Activated T-helper 2 cell treated with anti-CD3 and anti-CD28 coated beads, Interferon-gamma antibody, Interleukin-2, Interleukin-4, amounts not matched to agents 10 μg/mL and 5 μg/mL and 100 μg/mL, durations not matched to agents 14 hours and 24 hours and 36 hours (primary cell): ENCODE measurements at regions of chr15 and their contacts with region 1.

Region 1: GRCh38 chr15:63891079-63891767 is 57.5 kb upstream of the HERC1 start:
- DNase-seq: peak; percentile 61
- H3K4me3 Mint-ChIP-seq: no peak overlapping the region
- H3K27ac Mint-ChIP-seq: no peak overlapping the region
- H3K4me1 Mint-ChIP-seq: peaks cover 43% of the 10 kb centered on the region
- H3K27me3 Mint-ChIP-seq: no peaks in the 10 kb centered on the region

Region 2: GRCh38 chr15:63504247-63504978 is 386.8 kb before region 1 on chr15 and contains the start of gene USP3:
- intact Hi-C with region 1: loop called (anchors 10 kb)
- DNase-seq: peak; percentile 92
- H3K4me3 Mint-ChIP-seq: peak within 1 kb of the TSS; percentile 89
- H3K27ac Mint-ChIP-seq: peak within 1 kb of the TSS; percentile 89
- H3K4me1 Mint-ChIP-seq: peaks cover 69% of the 10 kb centered on the region
- H3K27me3 Mint-ChIP-seq: no peaks in the 10 kb centered on the region
- total RNA-seq, gene USP3: 41.2 and 47.6 TPM in 2 replicates

Region 3: GRCh38 chr15:63752075-63752684 is 139.0 kb before region 1 on chr15:
- intact Hi-C with region 1: loop called (anchors 1 kb)
- DNase-seq: peak; percentile 32
- H3K4me3 Mint-ChIP-seq: no peak overlapping the region
- H3K27ac Mint-ChIP-seq: no peak overlapping the region
- H3K4me1 Mint-ChIP-seq: peaks cover 5% of the 10 kb centered on the region
- H3K27me3 Mint-ChIP-seq: no peaks in the 10 kb centered on the region

Region 4: GRCh38 chr15:63848499-63849214 is 42.6 kb before region 1 on chr15:
- intact Hi-C with region 1: no loop called
- DNase-seq: no peak
- H3K4me3 Mint-ChIP-seq: no peak overlapping the region
- H3K27ac Mint-ChIP-seq: no peak overlapping the region
- H3K4me1 Mint-ChIP-seq: peaks cover 8% of the 10 kb centered on the region
- H3K27me3 Mint-ChIP-seq: no peaks in the 10 kb centered on the region

Region 5: DNA sequence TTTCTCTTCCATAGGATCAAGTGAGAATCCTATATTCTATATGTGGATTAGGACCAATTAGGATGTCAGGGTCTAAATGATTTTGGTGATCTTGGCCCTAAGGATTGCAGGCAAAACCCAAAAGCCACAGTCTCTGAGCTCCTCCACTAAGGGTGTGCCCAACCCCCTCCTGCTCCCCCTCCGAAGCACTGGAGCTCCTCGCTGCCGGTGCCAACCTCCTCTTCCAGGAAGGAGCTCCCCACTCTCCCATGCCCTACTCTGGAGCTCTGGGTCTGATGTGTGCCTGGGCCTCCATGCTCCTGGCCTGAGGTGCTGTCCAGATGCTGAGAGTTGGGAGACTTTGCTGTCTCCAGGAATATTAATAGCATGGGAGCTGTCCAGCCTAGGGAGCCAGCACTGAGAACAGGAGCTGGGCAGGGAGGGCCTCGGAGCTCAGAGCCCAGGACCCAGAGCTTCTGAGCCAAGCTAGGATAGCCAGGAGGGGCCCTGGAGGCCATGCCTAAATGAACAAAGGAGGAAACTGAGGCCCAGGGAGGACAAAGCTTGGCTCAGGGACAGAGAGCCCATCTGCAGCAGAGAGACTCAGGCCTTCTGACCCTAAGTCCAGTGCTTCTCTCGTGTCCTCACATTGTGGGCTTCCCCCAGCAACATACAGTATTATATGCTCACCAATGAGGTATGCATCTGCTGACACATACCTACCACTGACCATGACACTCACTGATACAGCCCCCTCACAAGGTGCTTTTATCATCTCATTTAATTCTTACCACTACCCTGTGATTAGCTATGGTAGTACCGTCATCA is 20.6 kb before region 1 on chr15:
- intact Hi-C with region 1: loop called (anchors 1 kb)
- DNase-seq: no peak
- H3K4me3 Mint-ChIP-seq: no peak overlapping the region
- H3K27ac Mint-ChIP-seq: peak overlapping the region; percentile 78
- H3K4me1 Mint-ChIP-seq: peaks cover 15% of the 10 kb centered on the region
- H3K27me3 Mint-ChIP-seq: no peaks in the 10 kb centered on the region

Region 6: GRCh38 chr15:63970621-63971426 is 79.6 kb after region 1 on chr15:
- intact Hi-C with region 1: loop called (anchors 2 kb)
- DNase-seq: no peak
- H3K4me3 Mint-ChIP-seq: peak overlapping the region; percentile 75
- H3K27ac Mint-ChIP-seq: peak overlapping the region; percentile 100
- H3K4me1 Mint-ChIP-seq: peaks cover 39% of the 10 kb centered on the region
- H3K27me3 Mint-ChIP-seq: no peaks in the 10 kb centered on the region

Region 7: GRCh38 chr15:64046347-64047153 is 155.3 kb after region 1 on chr15 and contains the start of gene DAPK2:
- intact Hi-C with region 1: loop called (anchors 5 kb)
- DNase-seq: peak; percentile 58
- H3K4me3 Mint-ChIP-seq: peak within 1 kb of the TSS; percentile 68
- H3K27ac Mint-ChIP-seq: no peak within 1 kb of the TSS
- H3K4me1 Mint-ChIP-seq: peaks cover 13% of the 10 kb centered on the region
- H3K27me3 Mint-ChIP-seq: peaks cover 28% of the 10 kb centered on the region
- total RNA-seq, gene DAPK2: 1.9 and 2.0 TPM in 2 replicates

Region 8: DNA sequence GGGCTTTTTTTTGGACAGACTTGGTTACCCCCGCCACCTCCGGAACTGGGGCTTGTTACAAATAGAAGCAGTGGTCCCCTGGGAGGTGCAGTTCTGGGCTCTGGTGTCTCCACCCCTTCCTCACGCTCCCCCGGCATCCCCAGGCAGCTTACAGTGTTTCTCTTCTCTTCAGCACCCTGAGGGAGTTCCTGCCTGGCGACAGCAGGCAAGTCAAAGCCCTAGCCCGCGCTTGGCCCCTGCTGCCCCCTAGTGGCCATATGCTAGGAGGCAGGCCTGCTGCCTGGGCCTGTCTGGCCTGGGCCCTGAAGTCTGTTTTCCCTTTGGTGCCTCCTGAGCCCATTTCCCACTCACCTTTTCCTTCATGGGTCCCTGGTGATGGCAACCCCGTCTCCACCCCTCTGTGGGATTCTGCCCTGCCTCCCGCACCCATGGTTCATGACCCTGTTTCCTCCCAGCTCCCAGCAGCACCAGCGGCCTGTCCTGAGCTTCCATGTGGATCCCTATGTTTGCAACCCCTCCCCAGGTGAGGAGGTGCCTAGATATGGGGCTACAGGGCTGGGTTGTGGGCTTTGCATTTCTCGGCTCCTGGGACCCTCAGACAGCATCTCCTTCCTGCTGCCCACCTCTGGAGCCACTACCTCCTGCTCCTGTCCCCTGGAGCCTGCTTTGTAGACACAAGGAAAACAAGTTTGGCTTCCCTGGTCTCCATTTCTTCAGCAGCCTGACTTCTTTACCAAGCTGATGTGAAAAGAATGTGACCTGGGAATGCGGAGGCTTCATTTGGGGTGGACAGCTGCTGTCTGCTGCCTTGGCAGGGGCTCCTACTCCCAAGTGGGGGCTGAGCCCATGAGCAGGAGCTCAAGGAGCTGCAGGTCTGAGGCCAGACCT is 262.5 kb after region 1 on chr15:
- intact Hi-C with region 1: loop called (anchors 10 kb)
- DNase-seq: peak; percentile 85
- H3K4me3 Mint-ChIP-seq: peak overlapping the region; percentile 67
- H3K27ac Mint-ChIP-seq: no peak overlapping the region
- H3K4me1 Mint-ChIP-seq: peaks cover 25% of the 10 kb centered on the region
- H3K27me3 Mint-ChIP-seq: peaks cover 7% of the 10 kb centered on the region

Region 9: DNA sequence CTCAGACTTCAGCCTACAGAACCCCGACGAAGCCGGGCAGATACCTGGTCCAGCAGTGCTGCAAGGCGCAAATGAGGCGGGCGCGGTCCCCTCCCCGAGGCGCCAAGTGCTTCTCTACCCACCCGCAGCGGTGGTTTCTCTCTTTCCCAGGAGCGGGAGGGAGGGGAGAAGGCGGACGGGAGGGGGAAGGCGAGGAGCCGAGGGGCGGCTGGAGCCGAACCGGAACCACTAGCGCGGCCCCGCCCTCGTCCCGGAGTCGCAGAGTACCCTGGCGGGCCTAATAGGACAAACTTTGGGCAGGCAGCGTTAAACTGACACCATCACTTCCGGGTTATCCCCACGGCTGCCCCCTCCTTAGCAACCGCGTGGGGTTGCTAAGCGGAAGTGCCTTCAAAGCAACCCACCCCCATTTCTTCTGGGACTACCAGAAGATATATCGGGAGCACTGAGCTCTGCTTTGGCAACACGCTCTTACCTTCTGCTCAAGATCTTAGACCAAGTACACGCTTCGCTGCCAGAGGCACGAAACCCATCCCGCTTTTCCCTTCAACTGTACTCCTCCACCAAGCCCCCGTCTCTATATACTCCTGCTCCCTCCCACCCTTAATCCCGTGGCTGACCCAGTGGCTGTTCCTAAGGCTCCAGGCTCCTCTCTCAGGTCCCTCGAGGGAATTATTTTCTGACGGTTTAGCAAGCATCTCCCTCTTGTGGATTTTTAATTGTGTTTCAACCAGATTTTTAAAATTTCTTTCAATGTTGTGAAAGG is 464.9 kb after region 1 on chr15 and contains the start of gene CSNK1G1:
- intact Hi-C with region 1: no loop called
- DNase-seq: peak; percentile 88
- H3K4me3 Mint-ChIP-seq: peak within 1 kb of the TSS; percentile 95
- H3K27ac Mint-ChIP-seq: peak within 1 kb of the TSS; percentile 95
- H3K4me1 Mint-ChIP-seq: peaks cover 21% of the 10 kb centered on the region
- H3K27me3 Mint-ChIP-seq: no peaks in the 10 kb centered on the region
- total RNA-seq, gene CSNK1G1: 31.8 and 34.8 TPM in 2 replicates